Pancreas (tissue), 10 donors: ENCODE measurements at regions of chr3 and their contacts with region 1.

Region 1: GRCh38 chr3:24365194-24365612 is 129.4 kb downstream of the THRB start:
- DNase-seq: peak in 4 of 6 donors; percentile 55 to 79 (median 76)
- ATAC-seq: peak; percentile 94 to 96 (median 96)
- H3K4me3 ChIP-seq: no peak overlapping the region
- H3K27ac ChIP-seq: peak overlapping the region in 2 of 4 donors; percentile 53 to 61
- H3K4me1 ChIP-seq: peaks cover 27 to 39% (median 33%) of the 10 kb centered on the region in 3 donors
- H3K27me3 ChIP-seq: no peaks in the 10 kb centered on the region
- CTCF ChIP-seq: no peak

Region 2: DNA sequence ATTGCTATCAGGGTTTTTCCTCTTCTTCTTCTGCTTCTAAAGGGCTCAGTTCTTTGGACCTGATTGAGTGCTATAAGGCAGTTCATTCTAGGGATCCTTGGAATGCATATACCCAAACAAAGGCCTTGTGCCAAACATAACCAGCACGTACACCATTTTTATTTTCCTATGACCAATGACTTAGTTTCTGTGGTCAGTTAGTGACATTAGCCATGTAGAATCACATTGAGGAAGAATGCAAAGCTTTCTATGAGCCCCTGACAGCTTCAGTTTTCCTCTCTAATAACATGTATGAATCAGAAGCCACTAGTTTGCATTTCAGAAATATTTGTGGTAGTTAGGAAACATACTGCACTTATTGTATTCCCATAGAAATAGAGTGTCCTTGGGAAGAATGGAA is 110.6 kb before region 1 on chr3:
- intact Hi-C with region 1: no loop called
- DNase-seq: no peak
- ATAC-seq: peak in 1 of 4 donors; percentile 14
- H3K4me3 ChIP-seq: no peak overlapping the region
- H3K27ac ChIP-seq: no peak overlapping the region
- H3K4me1 ChIP-seq: peaks cover 0 to 1% (median 0%) of the 10 kb centered on the region in 3 donors
- H3K27me3 ChIP-seq: no peaks in the 10 kb centered on the region
- CTCF ChIP-seq: no peak

Region 3: GRCh38 chr3:24494618-24495325 is 129.6 kb after region 1 on chr3 and contains the start of gene THRB:
- intact Hi-C with region 1: loop called in 1 of 3 experiments (anchors 10 kb)
- DNase-seq: peak; percentile 76 to 89 (median 81)
- ATAC-seq: peak; percentile 66 to 76 (median 68)
- H3K4me3 ChIP-seq: peak within 1 kb of the TSS; percentile 56 to 76 (median 70)
- H3K27ac ChIP-seq: peak within 1 kb of the TSS; percentile 96 to 98 (median 97)
- H3K4me1 ChIP-seq: peaks cover 0 to 11% (median 8%) of the 10 kb centered on the region in 3 donors
- H3K27me3 ChIP-seq: no peaks in the 10 kb centered on the region
- CTCF ChIP-seq: peak in 1 of 4 donors; percentile 10
- total RNA-seq, gene THRB: 6.6 to 12.4 (median 8.7) TPM